Activated CD8-positive, alpha-beta T cell treated with anti-CD3 and anti-CD28 coated beads for 36 hours (primary cell): ENCODE measurements at regions of chr2 and their contacts with region 1.

Region 1: GRCh38 chr2:199704358-199705238 is 146.4 kb downstream of the FTCDNL1 start:
- DNase-seq: peak; percentile 38
- ATAC-seq: peak; percentile 68
- H3K4me3 Mint-ChIP-seq: no peak overlapping the region
- H3K27ac Mint-ChIP-seq: no peak overlapping the region
- H3K4me1 Mint-ChIP-seq: peaks cover 2% of the 10 kb centered on the region
- H3K27me3 Mint-ChIP-seq: peaks cover 5% of the 10 kb centered on the region
- CTCF ChIP-seq: peak; percentile 49

Region 2: DNA sequence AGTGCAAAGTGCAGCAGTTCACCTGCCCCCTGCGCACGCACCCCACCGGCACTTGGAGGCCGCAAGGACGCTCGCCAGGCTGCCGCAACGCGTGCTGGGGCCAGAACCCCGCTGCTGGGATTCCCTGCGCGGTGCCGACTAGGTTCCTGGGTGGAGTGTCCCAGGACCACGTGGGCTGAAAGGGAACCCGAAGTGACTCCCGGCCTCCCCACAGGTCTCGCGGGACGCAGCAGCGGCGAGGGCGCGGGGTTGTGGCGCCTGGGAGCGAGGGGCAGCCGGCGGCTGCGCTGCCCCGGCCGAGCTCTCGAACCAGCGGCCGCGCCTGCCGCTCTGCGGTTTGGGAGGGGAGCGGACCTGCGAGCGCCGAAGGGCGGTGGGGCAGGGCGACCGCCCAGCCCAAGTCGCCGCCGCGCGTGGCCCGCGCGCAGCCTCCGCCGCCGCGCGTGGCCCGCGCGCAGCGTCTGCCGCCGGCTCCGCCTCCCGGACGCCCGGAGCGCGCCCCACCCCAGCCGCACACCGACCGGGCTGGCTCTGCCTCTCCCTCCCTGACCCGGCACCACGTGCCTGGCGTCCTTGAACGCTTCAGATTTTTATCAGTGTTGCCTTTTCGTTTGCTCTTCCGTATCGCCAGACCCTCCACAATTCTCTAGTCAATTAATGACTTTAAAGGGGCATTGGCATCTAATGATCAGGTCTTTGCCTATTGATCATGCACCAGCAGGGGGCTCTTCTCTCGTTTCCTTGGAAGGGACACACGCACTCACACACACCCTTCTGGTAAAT is 146.3 kb after region 1 on chr2 and contains the start of gene FTCDNL1:
- CTCF ChIA-PET with region 1: interaction called, 3 read pairs
- POLR2A ChIA-PET with region 1: no interaction called
- intact Hi-C with region 1: loop called (anchors 10 kb)
- DNase-seq: peak; percentile 71
- ATAC-seq: peak; percentile 97
- H3K4me3 Mint-ChIP-seq: peak within 1 kb of the TSS; percentile 95
- H3K27ac Mint-ChIP-seq: peak within 1 kb of the TSS; percentile 90
- H3K4me1 Mint-ChIP-seq: peaks cover 12% of the 10 kb centered on the region
- H3K27me3 Mint-ChIP-seq: peaks cover 7% of the 10 kb centered on the region
- CTCF ChIP-seq: peak; percentile 55
- total RNA-seq, gene FTCDNL1: 1.9 to 2.0 TPM